ENCODE measurements at regions of chr5 and their contacts with region 1.

Region 1: GRCh38 chr5:126443374-126443851 is 20.2 kb downstream of the GRAMD2B start:
- DNase-seq: no peak
- H3K4me3 ChIP-seq: no peak overlapping the region
- H3K27me3 ChIP-seq: no peaks in the 10 kb centered on the region
- CTCF ChIP-seq: no peak

Region 2: GRCh38 chr5:126360467-126360866 is 82.9 kb before region 1 on chr5:
- CTCF ChIA-PET with region 1: no interaction called
- POLR2A ChIA-PET with region 1: interaction called, 14 read pairs
- DNase-seq: no peak
- H3K4me3 ChIP-seq: no peak overlapping the region
- H3K27me3 ChIP-seq: no peaks in the 10 kb centered on the region
- CTCF ChIP-seq: no peak

Measured in BJ (cell line).